ENCODE measurements at regions of chr12 and their contacts with region 1.

Region 1: DNA sequence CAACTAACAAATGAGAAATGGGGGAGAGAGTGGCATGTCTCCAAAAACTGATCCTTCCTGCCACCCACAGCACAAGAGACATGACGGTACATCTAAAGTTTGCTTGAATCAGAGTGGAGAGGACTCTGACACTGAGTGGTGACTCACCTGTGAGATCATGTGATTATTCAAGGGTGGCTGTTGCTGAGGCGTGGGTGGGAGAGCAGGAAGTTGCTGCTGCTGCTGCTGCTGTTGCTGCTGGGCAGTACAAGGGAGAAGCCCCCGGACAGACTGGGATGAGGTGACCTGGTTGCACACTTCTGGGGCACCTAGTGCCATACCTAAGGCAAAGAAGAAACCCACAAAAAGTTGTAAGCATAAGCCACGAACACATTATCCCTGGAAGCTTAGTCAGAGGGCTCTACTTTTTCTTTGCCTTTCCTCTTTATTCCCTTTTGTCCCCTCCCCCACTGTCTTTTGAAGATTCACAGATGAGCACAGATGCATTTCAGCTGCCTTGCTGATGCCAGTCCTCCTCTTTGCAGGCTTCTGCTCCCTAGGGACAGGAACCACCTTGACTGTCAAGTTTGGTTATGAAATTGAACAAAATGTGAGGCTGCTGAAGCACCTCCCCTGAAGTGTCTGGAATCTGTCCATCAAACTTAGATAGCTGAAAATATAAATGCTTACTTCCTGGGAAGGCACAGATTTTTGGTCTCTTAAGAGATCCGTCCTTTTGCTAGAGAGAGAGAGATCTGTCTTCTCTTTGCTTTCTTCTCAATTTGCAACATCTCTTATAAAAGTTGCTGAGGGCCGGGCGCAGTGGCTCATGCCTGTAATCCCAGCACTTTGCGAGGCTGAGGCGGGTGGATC is 29.4 kb upstream of the STAC3 start:
- DNase-seq: peak in 8 of 9 donors; percentile 25 to 75 (median 54)
- ATAC-seq: peak; percentile 98
- H3K4me3 ChIP-seq: no peak overlapping the region
- H3K4me3 Mint-ChIP-seq: peak overlapping the region; percentile 7 to 72 (median 59)
- H3K27ac ChIP-seq: peak overlapping the region; percentile 74
- H3K27ac Mint-ChIP-seq: peak overlapping the region; percentile 85 to 95 (median 90)
- H3K4me1 ChIP-seq: peaks cover 10 to 15% of the 10 kb centered on the region in 2 donors
- H3K4me1 Mint-ChIP-seq: peaks cover 12 to 30% (median 21%) of the 10 kb centered on the region in 7 donors
- H3K27me3 ChIP-seq: no peaks in the 10 kb centered on the region
- H3K27me3 Mint-ChIP-seq: no peaks in the 10 kb centered on the region

Region 2: DNA sequence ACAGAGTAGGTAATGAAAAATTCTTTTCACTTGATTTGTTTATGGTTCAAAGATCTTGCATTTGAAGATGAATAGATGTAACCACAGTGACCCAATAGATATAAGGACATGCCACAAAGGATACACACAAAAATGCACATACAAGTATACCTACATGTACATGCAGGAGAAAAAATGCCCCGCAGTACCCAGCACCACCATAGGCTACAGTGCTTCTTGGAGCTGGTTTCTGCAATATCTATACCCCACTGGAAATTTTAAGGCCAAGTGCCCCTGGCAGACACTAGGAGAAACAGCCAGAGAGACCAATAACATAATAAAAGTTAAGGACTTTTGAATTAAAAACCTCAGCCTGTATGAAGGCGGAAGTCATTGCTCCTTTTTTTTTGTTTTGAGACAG is 17.3 kb before region 1 on chr12:
- CTCF ChIA-PET with region 1: interaction called, 5 read pairs
- POLR2A ChIA-PET with region 1: interaction called, 6 read pairs
- intact Hi-C with region 1: loop called in 1 of 2 experiments (anchors 1 kb)
- DNase-seq: no peak
- ATAC-seq: no peak
- H3K4me3 ChIP-seq: no peak overlapping the region
- H3K4me3 Mint-ChIP-seq: no peak overlapping the region
- H3K27ac ChIP-seq: no peak overlapping the region
- H3K27ac Mint-ChIP-seq: no peak overlapping the region
- H3K4me1 ChIP-seq: no peaks in the 10 kb centered on the region
- H3K4me1 Mint-ChIP-seq: peaks cover 0 to 5% (median 0%) of the 10 kb centered on the region in 7 donors
- H3K27me3 ChIP-seq: no peaks in the 10 kb centered on the region
- H3K27me3 Mint-ChIP-seq: no peaks in the 10 kb centered on the region